CD8-positive, alpha-beta T cell (primary cell): ENCODE measurements at regions of chr16 and their contacts with region 1.

Region 1: DNA sequence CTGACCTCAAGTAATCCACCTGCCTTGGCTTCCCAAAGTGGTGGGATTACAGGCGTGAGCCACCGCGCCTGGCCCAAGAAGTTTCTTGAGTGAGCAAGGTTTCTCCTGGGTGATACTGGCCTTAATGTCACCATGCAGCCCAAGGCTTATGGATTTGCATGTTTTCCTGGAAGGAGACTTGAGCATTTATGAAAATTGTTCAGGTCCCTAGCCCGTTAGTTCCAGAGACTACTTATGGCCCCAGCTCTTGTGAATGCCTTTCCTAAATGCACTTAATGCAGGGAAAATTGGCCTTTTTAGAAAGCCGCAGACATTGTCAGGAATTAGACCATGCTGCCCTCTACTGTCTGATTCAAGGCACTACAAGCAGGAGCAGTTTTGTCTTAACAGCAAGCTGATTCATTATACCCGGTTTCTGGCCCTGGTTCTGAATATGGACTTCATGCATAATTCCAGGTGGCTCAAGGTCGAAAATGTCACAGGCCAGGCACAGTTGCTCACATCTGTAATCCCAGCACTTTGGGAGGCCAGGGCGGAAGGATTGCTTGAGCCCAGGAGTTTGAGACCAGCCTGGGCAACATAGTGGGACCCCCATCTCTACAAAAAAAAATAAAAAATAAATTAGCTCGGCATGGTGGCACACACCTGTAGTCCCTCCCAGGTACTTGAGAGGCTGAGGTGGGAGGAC is 91.3 kb downstream of the SNX29 start:
- DNase-seq: peak in 8 of 9 experiments; percentile 38 to 80 (median 56)
- ATAC-seq: peak; percentile 96
- H3K4me3 ChIP-seq: no peak overlapping the region
- H3K4me3 Mint-ChIP-seq: no peak overlapping the region
- H3K27ac ChIP-seq: no peak overlapping the region
- H3K27ac Mint-ChIP-seq: no peak overlapping the region
- H3K4me1 ChIP-seq: no peaks in the 10 kb centered on the region
- H3K4me1 Mint-ChIP-seq: peaks cover 4% of the 10 kb centered on the region
- H3K27me3 ChIP-seq: no peaks in the 10 kb centered on the region
- H3K27me3 Mint-ChIP-seq: no peaks in the 10 kb centered on the region
- CTCF ChIP-seq: peak; percentile 85

Region 2: DNA sequence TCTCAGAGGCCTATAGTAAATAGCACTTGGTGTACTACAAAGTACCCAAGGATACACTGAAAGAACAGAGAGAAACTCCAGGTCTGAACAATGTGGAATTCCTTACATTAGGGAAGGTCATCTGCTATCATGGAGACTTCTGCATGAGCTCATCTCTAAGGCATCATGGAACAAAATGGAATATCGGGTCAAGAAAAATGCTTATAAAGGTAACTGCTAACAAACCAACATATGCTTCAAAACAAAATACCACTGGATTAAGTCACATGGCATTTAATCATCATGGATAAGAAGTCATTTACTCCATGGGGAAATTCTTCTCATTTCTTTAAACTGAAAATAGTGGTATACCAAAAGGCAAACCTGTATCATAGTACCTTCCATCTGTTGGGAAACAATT is 359.4 kb before region 1 on chr16:
- CTCF ChIA-PET with region 1: no interaction called
- POLR2A ChIA-PET with region 1: no interaction called
- intact Hi-C with region 1: loop called in 1 of 2 experiments (anchors 5 kb)
- DNase-seq: no peak
- ATAC-seq: no peak
- H3K4me3 ChIP-seq: no peak overlapping the region
- H3K4me3 Mint-ChIP-seq: no peak overlapping the region
- H3K27ac ChIP-seq: no peak overlapping the region
- H3K27ac Mint-ChIP-seq: no peak overlapping the region
- H3K4me1 ChIP-seq: no peaks in the 10 kb centered on the region
- H3K4me1 Mint-ChIP-seq: peaks cover 15% of the 10 kb centered on the region
- H3K27me3 ChIP-seq: no peaks in the 10 kb centered on the region
- H3K27me3 Mint-ChIP-seq: no peaks in the 10 kb centered on the region
- CTCF ChIP-seq: no peak

Region 3: DNA sequence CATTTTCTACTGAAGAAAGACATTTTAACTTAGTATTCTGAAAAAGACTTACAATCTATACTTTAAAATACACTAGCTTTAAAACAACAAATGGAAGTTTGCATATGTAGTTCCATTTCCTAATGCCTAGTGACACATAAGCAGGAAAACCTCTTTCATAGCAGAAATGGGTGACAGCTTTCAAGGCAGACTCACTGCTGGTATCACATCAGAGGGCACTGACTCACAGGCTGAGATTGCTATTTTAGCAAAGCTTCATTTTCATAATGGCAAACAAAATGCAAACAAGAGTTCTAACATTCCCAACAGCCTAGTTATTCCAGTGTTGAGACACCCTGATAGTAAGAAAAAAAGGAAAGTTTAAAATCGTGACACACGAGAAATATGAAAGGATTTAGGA is 171.1 kb before region 1 on chr16:
- CTCF ChIA-PET with region 1: no interaction called
- POLR2A ChIA-PET with region 1: no interaction called
- intact Hi-C with region 1: loop called in 1 of 2 experiments (anchors 5 kb)
- DNase-seq: no peak
- ATAC-seq: no peak
- H3K4me3 ChIP-seq: no peak overlapping the region
- H3K4me3 Mint-ChIP-seq: no peak overlapping the region
- H3K27ac ChIP-seq: no peak overlapping the region
- H3K27ac Mint-ChIP-seq: peak overlapping the region; percentile 9
- H3K4me1 ChIP-seq: peaks cover 25% of the 10 kb centered on the region
- H3K4me1 Mint-ChIP-seq: peaks cover 46% of the 10 kb centered on the region
- H3K27me3 ChIP-seq: no peaks in the 10 kb centered on the region
- H3K27me3 Mint-ChIP-seq: no peaks in the 10 kb centered on the region
- CTCF ChIP-seq: no peak

Region 4: GRCh38 chr16:11972128-11972527 is 95.7 kb before region 1 on chr16:
- CTCF ChIA-PET with region 1: interaction called, 16 read pairs
- POLR2A ChIA-PET with region 1: no interaction called
- intact Hi-C with region 1: loop called in 1 of 2 experiments (anchors 10 kb)
- DNase-seq: no peak
- ATAC-seq: no peak
- H3K4me3 ChIP-seq: no peak overlapping the region
- H3K4me3 Mint-ChIP-seq: no peak overlapping the region
- H3K27ac ChIP-seq: no peak overlapping the region
- H3K27ac Mint-ChIP-seq: no peak overlapping the region
- H3K4me1 ChIP-seq: peaks cover 7% of the 10 kb centered on the region
- H3K4me1 Mint-ChIP-seq: peaks cover 14% of the 10 kb centered on the region
- H3K27me3 ChIP-seq: no peaks in the 10 kb centered on the region
- H3K27me3 Mint-ChIP-seq: no peaks in the 10 kb centered on the region
- CTCF ChIP-seq: no peak

Region 5: DNA sequence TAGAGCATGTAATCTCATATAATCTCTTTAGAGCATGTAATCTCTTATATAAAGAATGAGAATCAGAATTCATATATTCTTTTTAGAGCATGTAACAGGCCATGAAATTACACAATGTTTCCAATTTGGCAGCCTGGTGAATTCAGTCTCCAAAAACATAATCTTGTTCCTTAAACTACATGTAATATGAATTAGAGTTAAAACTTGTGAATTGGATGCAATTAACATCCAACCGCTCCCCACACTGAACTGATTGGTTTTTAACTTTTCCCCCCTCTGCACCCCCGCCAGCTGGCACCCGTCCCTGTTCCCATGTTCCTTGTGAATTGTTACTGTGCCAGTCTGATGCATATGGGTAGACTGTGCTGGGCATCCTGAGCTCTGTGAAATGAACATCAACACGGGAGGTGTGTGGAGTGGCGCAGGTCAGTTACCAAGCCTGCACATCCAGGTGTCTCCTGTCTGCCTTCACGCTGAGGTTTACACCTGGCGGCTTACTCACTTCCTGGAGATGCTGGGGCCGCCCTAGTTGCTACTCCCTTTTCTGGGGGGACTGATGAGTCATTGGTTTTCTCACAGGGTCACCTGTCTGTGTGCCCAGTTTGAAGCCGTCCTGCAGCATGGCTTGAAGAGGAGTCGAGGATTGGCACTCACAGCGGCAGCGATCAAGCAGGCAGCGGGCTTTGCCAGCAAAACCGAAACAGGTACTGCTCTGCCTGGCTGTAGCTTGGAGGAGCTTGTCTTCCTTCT is 40.9 kb before region 1 on chr16:
- CTCF ChIA-PET with region 1: no interaction called
- POLR2A ChIA-PET with region 1: no interaction called
- intact Hi-C with region 1: no loop called
- DNase-seq: peak in 4 of 9 experiments; percentile 10 to 48 (median 23)
- ATAC-seq: peak; percentile 42
- H3K4me3 ChIP-seq: no peak overlapping the region
- H3K4me3 Mint-ChIP-seq: no peak overlapping the region
- H3K27ac ChIP-seq: no peak overlapping the region
- H3K27ac Mint-ChIP-seq: peak overlapping the region; percentile 24
- H3K4me1 ChIP-seq: no peaks in the 10 kb centered on the region
- H3K4me1 Mint-ChIP-seq: peaks cover 10% of the 10 kb centered on the region
- H3K27me3 ChIP-seq: no peaks in the 10 kb centered on the region
- H3K27me3 Mint-ChIP-seq: no peaks in the 10 kb centered on the region
- CTCF ChIP-seq: no peak

Region 6: DNA sequence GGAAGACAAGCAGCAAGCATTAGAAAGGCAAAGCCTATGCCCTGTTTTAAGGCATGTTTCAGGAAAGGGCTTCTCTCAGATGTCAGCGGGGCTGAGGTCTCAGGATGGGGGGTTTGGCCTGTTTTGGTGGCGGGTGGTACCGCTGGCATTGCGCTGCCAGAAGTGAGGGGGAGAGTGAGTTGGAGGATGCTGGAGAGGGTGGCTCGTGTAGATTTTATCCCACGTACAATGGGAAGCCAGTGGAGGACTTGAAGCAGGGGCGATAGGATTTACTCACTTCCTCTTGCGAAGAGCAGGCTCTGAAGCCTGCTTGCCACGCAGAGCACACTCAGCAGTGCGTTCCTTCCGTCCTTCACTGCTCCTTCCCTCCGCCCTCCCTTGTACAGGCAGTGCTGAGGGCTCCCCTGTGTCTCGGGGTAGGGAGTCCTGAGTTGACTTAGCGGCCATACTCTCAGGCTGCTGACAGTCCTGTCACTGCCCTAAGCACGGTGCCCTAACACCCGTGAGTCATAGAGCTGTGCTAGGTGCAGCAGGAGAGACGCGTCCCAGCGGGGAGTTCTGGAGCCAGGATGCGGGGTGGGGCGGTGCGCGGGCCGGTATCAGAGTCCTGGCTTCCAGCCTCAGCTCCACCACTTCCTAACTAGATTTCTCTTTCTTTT is 21.8 kb after region 1 on chr16:
- CTCF ChIA-PET with region 1: interaction called, 52 read pairs
- POLR2A ChIA-PET with region 1: interaction called, 3 read pairs
- intact Hi-C with region 1: no loop called
- DNase-seq: peak in 7 of 9 experiments; percentile 22 to 66 (median 38)
- ATAC-seq: peak; percentile 91
- H3K4me3 ChIP-seq: peak overlapping the region; percentile 13 to 55
- H3K4me3 Mint-ChIP-seq: peak overlapping the region; percentile 83
- H3K27ac ChIP-seq: peak overlapping the region; percentile 34 to 58
- H3K27ac Mint-ChIP-seq: peak overlapping the region; percentile 94
- H3K4me1 ChIP-seq: peaks cover 31% of the 10 kb centered on the region
- H3K4me1 Mint-ChIP-seq: peaks cover 53% of the 10 kb centered on the region
- H3K27me3 ChIP-seq: no peaks in the 10 kb centered on the region
- H3K27me3 Mint-ChIP-seq: no peaks in the 10 kb centered on the region
- CTCF ChIP-seq: no peak